Heart left ventricle (tissue), 16 donors: ENCODE measurements at regions of chr9 and their contacts with region 1.

Region 1: DNA sequence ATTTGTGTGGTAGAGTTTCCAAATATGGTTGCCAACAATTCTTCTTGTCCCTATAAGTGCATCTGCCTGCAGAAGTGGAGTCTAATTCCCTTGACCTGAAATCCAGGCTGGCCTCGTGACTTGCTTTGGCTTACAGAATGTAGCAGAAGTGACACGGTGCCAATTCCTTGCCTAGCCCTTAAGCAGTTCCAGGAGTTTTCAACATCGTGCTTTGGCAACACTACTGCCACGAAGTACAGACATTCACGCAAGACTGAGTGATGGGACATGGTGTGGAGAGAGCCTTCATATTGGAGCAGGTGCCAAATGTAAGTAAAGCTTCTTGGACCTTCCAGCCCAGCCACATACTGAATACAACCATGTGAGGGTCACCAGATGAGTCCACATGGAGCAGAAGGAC is 92.9 kb upstream of the NEK6 start:
- DNase-seq: peak in 1 of 5 donors; percentile 44
- ATAC-seq: peak in 2 of 4 donors; percentile 41 to 51
- H3K4me3 ChIP-seq: no peak overlapping the region
- H3K27ac ChIP-seq: no peak overlapping the region
- H3K4me1 ChIP-seq: peaks cover 0 to 6% (median 0%) of the 10 kb centered on the region in 12 donors
- H3K27me3 ChIP-seq: no peaks in the 10 kb centered on the region
- CTCF ChIP-seq: no peak
- POLR2A ChIP-seq: no peak

Region 2: GRCh38 chr9:124218438-124218982 is 53.7 kb after region 1 on chr9:
- intact Hi-C with region 1: loop called in 1 of 10 experiments (anchors 10 kb)
- DNase-seq: peak; percentile 42 to 70 (median 61)
- ATAC-seq: peak in 3 of 4 donors; percentile 49 to 70 (median 61)
- H3K4me3 ChIP-seq: no peak overlapping the region
- H3K27ac ChIP-seq: peak overlapping the region in 1 of 12 donors; percentile 86
- H3K4me1 ChIP-seq: peaks cover 2 to 100% (median 32%) of the 10 kb centered on the region in 12 donors
- H3K27me3 ChIP-seq: no peaks in the 10 kb centered on the region
- CTCF ChIP-seq: no peak
- POLR2A ChIP-seq: no peak

Region 3: DNA sequence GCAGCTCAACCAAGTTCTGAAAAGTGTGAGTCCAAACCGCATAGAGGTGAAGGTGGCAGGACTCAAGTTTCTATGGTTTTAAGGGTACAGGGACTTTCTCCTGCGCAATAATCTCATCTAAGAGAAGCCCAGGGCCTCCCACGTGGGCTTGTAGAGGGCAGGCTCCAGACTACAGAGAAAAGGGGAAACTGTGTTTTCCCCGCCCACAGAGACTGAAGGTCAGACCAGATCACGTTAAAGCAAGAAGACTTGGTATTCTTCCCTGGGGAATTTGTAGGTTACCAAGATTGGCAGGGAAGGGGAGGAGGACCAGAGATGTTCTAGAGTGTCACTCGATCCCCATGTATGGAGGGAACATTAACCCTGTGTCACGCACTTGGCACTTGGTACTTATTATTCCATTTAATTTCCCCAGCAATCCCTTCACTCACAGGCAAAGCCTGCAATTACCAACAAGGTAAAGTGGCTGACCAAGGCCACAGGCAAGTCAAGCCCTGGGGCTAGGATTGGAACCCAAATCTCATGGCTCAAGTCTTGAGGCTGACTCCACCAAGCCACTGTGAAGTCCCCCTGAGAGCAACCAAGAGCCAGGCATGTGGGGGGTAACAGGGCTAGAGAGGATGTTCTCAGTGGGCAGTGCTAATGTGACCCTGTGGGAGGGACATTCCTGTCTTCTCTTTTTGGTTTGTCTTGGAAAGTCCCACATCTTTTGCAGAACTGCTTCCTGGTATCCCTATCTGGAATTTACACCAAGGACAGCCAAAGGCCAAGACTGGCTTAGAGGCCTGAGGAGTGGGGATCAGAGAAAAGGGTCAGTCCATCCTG is 74.7 kb after region 1 on chr9:
- intact Hi-C with region 1: loop called in 1 of 10 experiments (anchors 10 kb)
- DNase-seq: peak in 2 of 5 donors; percentile 35 to 55
- ATAC-seq: peak in 2 of 4 donors; percentile 60 to 62
- H3K4me3 ChIP-seq: no peak overlapping the region
- H3K27ac ChIP-seq: peak overlapping the region in 1 of 12 donors; percentile 1
- H3K4me1 ChIP-seq: peaks cover 0 to 38% (median 9%) of the 10 kb centered on the region in 12 donors
- H3K27me3 ChIP-seq: no peaks in the 10 kb centered on the region
- CTCF ChIP-seq: no peak
- POLR2A ChIP-seq: no peak